MCF 10A (cell line): ENCODE measurements at regions of chr1 and their contacts with region 1.

Region 1: GRCh38 chr1:198443374-198444233 is 96.9 kb downstream of the ATP6V1G3 start:
- DNase-seq: peak; percentile 99
- H3K4me3 Mint-ChIP-seq: peak overlapping the region; percentile 32
- H3K27ac Mint-ChIP-seq: peak overlapping the region; percentile 85
- H3K4me1 Mint-ChIP-seq: peaks cover 23% of the 10 kb centered on the region
- H3K27me3 Mint-ChIP-seq: no peaks in the 10 kb centered on the region
- CTCF ChIP-seq: no peak

Region 2: DNA sequence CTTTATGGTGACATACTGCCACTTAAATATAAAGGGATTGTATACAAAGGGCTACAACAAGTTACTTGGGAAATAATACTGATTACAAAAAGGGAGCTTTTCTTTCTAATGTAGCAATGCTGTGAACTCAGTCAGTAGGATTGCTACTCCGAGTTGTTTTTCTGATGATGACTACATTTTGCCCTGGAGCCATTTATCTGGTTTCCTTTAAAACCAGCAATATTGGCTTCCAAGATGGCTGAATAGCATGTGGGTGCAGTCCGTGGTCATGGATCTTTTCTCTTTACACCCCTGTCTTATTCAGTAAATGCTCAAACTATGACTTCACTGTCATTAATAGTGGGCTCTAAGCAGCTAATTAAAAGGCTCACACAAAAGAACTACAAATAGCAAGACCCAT is 379.4 kb before region 1 on chr1:
- CTCF ChIA-PET with region 1: no interaction called
- POLR2A ChIA-PET with region 1: no interaction called
- intact Hi-C with region 1: no loop called
- DNase-seq: peak; percentile 51
- H3K4me3 Mint-ChIP-seq: no peak overlapping the region
- H3K27ac Mint-ChIP-seq: peak overlapping the region; percentile 80
- H3K4me1 Mint-ChIP-seq: peaks cover 7% of the 10 kb centered on the region
- H3K27me3 Mint-ChIP-seq: no peaks in the 10 kb centered on the region
- CTCF ChIP-seq: no peak

Region 3: GRCh38 chr1:198253668-198254067 is 189.9 kb before region 1 on chr1:
- CTCF ChIA-PET with region 1: no interaction called
- POLR2A ChIA-PET with region 1: no interaction called
- intact Hi-C with region 1: loop called (anchors 5 kb)
- DNase-seq: peak; percentile 46
- H3K4me3 Mint-ChIP-seq: peak overlapping the region; percentile 2
- H3K27ac Mint-ChIP-seq: peak overlapping the region; percentile 77
- H3K4me1 Mint-ChIP-seq: peaks cover 16% of the 10 kb centered on the region
- H3K27me3 Mint-ChIP-seq: no peaks in the 10 kb centered on the region
- CTCF ChIP-seq: no peak

Region 4: DNA sequence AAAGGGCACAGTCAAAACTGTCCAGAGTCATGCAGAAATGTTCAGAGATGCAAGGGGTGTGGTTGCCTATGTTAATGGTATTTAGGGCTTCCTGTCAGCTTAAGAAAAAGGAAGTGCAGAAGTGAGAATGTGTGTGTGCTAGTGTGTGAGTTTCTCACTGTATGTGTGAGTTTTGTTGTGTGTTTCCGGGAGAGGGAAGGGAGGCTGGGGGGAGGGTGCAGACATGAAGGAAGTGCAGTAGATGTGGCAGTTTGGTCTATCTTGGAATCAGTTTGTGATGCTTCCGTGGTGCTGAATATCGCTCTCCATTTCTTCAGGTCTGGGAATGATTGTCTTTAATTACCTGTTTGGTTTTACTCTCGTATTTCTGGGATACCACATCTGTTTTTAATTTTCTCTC is 113.4 kb after region 1 on chr1:
- CTCF ChIA-PET with region 1: no interaction called
- POLR2A ChIA-PET with region 1: no interaction called
- intact Hi-C with region 1: no loop called
- DNase-seq: no peak
- H3K4me3 Mint-ChIP-seq: no peak overlapping the region
- H3K27ac Mint-ChIP-seq: no peak overlapping the region
- H3K4me1 Mint-ChIP-seq: peaks cover 9% of the 10 kb centered on the region
- H3K27me3 Mint-ChIP-seq: no peaks in the 10 kb centered on the region
- CTCF ChIP-seq: no peak

Region 5: GRCh38 chr1:198726455-198726854 is 282.9 kb after region 1 on chr1:
- CTCF ChIA-PET with region 1: no interaction called
- POLR2A ChIA-PET with region 1: no interaction called
- intact Hi-C with region 1: no loop called
- DNase-seq: no peak
- H3K4me3 Mint-ChIP-seq: no peak overlapping the region
- H3K27ac Mint-ChIP-seq: no peak overlapping the region
- H3K4me1 Mint-ChIP-seq: no peaks in the 10 kb centered on the region
- H3K27me3 Mint-ChIP-seq: no peaks in the 10 kb centered on the region
- CTCF ChIP-seq: no peak